CD8-positive, alpha-beta T cell (primary cell): ENCODE measurements at regions of chr11 and their contacts with region 1.

Region 1: GRCh38 chr11:122668562-122669090 is 13.1 kb downstream of the UBASH3B start:
- DNase-seq: peak in 2 of 9 experiments; percentile 38 to 66
- ATAC-seq: peak; percentile 72
- H3K4me3 ChIP-seq: no peak overlapping the region
- H3K4me3 Mint-ChIP-seq: peak overlapping the region; percentile 42
- H3K27ac ChIP-seq: peak overlapping the region; percentile 4 to 39
- H3K27ac Mint-ChIP-seq: peak overlapping the region; percentile 90
- H3K4me1 ChIP-seq: peaks cover 63% of the 10 kb centered on the region
- H3K4me1 Mint-ChIP-seq: peaks cover 77% of the 10 kb centered on the region
- H3K27me3 ChIP-seq: no peaks in the 10 kb centered on the region
- H3K27me3 Mint-ChIP-seq: no peaks in the 10 kb centered on the region
- CTCF ChIP-seq: no peak

Region 2: GRCh38 chr11:121292495-121293287 is 1375.9 kb before region 1 on chr11 and contains the start of gene SC5D:
- CTCF ChIA-PET with region 1: no interaction called
- POLR2A ChIA-PET with region 1: no interaction called
- intact Hi-C with region 1: loop called in 1 of 2 experiments (anchors 10 kb)
- DNase-seq: peak; percentile 86 to 98 (median 95)
- ATAC-seq: peak; percentile 83
- H3K4me3 ChIP-seq: peak within 1 kb of the TSS; percentile 77 to 79
- H3K4me3 Mint-ChIP-seq: peak within 1 kb of the TSS; percentile 97
- H3K27ac ChIP-seq: peak within 1 kb of the TSS; percentile 94 to 97
- H3K27ac Mint-ChIP-seq: peak within 1 kb of the TSS; percentile 99
- H3K4me1 ChIP-seq: peaks cover 14% of the 10 kb centered on the region
- H3K4me1 Mint-ChIP-seq: peaks cover 58% of the 10 kb centered on the region
- H3K27me3 ChIP-seq: no peaks in the 10 kb centered on the region
- H3K27me3 Mint-ChIP-seq: no peaks in the 10 kb centered on the region
- CTCF ChIP-seq: no peak
- total RNA-seq, gene SC5D: 69.2 to 70.1 TPM

Region 3: DNA sequence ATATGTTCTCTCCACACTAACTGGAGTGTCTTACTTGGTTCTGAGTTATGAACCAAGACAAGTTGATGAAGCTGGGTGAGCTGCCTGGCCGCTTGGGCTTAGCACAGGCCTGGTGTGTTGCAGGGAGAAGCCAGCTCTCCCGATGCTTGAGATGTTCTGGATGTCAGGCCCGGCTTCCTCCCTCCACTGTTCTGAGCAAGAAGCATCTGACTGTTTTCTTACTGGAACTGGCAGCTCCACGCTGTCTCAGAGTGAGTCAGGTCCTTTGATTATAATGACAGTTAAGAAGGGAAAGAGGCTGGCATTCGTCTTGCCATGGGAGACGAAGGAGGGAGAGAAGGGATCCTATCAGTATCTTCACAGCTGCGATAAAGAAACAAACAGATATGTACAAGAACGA is 123.2 kb after region 1 on chr11:
- CTCF ChIA-PET with region 1: no interaction called
- POLR2A ChIA-PET with region 1: no interaction called
- intact Hi-C with region 1: no loop called
- DNase-seq: no peak
- ATAC-seq: no peak
- H3K4me3 ChIP-seq: no peak overlapping the region
- H3K4me3 Mint-ChIP-seq: no peak overlapping the region
- H3K27ac ChIP-seq: no peak overlapping the region
- H3K27ac Mint-ChIP-seq: no peak overlapping the region
- H3K4me1 ChIP-seq: no peaks in the 10 kb centered on the region
- H3K4me1 Mint-ChIP-seq: peaks cover 4% of the 10 kb centered on the region
- H3K27me3 ChIP-seq: no peaks in the 10 kb centered on the region
- H3K27me3 Mint-ChIP-seq: no peaks in the 10 kb centered on the region
- CTCF ChIP-seq: no peak

Region 4: DNA sequence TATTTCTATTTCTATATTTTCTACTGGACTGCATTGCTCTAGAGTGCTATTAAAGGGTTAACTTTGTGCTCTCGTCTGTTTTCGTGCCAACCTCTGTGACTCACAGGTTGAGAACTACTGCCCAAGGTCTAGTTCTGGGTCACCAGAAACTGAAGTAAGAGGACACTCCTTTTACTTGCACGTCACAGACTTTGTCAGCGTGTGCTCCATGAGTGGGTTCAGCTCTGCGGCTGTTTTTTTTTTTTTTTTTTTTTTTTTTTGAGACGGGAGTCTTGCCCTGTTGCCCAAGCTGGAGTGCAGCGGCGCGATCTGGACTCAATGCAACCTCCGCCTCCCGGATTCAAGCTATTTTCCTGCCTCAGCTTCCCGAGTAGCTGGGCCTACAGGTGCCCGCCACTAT is 476.6 kb after region 1 on chr11:
- CTCF ChIA-PET with region 1: no interaction called
- POLR2A ChIA-PET with region 1: no interaction called
- intact Hi-C with region 1: no loop called
- DNase-seq: no peak
- ATAC-seq: no peak
- H3K4me3 ChIP-seq: no peak overlapping the region
- H3K4me3 Mint-ChIP-seq: no peak overlapping the region
- H3K27ac ChIP-seq: no peak overlapping the region
- H3K27ac Mint-ChIP-seq: no peak overlapping the region
- H3K4me1 ChIP-seq: no peaks in the 10 kb centered on the region
- H3K4me1 Mint-ChIP-seq: no peaks in the 10 kb centered on the region
- H3K27me3 ChIP-seq: no peaks in the 10 kb centered on the region
- H3K27me3 Mint-ChIP-seq: no peaks in the 10 kb centered on the region
- CTCF ChIP-seq: no peak